ENCODE measurements at regions of chr20 and their contacts with region 1.

Region 1: GRCh38 chr20:34069341-34070078 is 42.5 kb downstream of the EIF2S2 start:
- DNase-seq: peak; percentile 48 to 75
- ATAC-seq: peak; percentile 86 to 93 (median 88)
- H3K4me3 ChIP-seq: no peak overlapping the region
- H3K27ac ChIP-seq: peak overlapping the region in 2 of 10 donors; percentile 4 to 54
- H3K4me1 ChIP-seq: peaks cover 14 to 53% (median 38%) of the 10 kb centered on the region in 9 donors
- H3K27me3 ChIP-seq: no peaks in the 10 kb centered on the region
- CTCF ChIP-seq: peak; percentile 57 to 93 (median 87)

Region 2: GRCh38 chr20:33791959-33792597 is 277.4 kb before region 1 on chr20:
- intact Hi-C with region 1: loop called in 4 of 10 experiments (anchors 2 to 10 kb)
- DNase-seq: peak; percentile 40 to 43
- ATAC-seq: peak in 4 of 8 donors; percentile 25 to 48 (median 34)
- H3K4me3 ChIP-seq: no peak overlapping the region
- H3K27ac ChIP-seq: peak overlapping the region in 6 of 10 donors; percentile 31 to 76 (median 59)
- H3K4me1 ChIP-seq: peaks cover 10 to 57% (median 43%) of the 10 kb centered on the region in 9 donors
- H3K27me3 ChIP-seq: no peaks in the 10 kb centered on the region
- CTCF ChIP-seq: peak; percentile 59 to 85 (median 80)

Region 3: DNA sequence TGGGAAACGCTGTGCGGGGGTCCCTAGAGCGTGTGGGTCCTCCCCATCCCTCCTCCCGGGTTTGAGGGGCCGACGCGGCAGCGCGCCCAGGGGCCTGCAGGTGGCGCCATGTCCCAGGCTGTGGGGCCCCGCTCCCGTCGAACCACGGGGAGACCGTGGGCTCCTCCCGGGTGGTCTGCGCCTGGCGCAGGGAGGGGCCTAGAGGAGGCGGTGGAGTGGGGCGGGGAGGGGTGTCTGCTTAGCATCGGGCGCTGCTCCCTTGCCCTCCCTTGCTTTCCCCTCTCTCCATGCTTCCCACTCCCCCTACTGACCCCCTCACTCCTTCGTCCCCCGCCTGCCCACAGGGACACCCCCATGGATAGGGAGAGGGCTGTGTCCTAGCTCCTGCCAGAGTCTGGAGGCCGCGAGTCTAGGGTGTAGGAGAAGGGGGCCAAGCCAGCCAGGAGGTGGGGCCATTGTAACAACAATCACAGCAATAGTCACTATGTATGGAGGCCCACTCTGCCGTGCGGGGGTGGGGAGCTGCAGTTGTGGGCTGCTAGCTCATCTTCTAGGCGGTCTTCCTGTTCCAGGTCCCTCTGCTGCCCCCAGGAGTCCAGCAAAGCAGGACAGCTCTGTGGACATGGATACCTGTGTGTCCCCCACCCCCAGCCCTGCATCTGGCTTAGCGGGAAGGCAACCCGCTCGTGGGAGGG is 206.7 kb before region 1 on chr20:
- intact Hi-C with region 1: loop called (anchors 1 to 5 kb)
- DNase-seq: peak; percentile 46 to 47
- ATAC-seq: peak; percentile 67 to 85 (median 78)
- H3K4me3 ChIP-seq: peak overlapping the region in 6 of 10 donors; percentile 10 to 27 (median 18)
- H3K27ac ChIP-seq: no peak overlapping the region
- H3K4me1 ChIP-seq: peaks cover 2 to 29% (median 21%) of the 10 kb centered on the region in 9 donors
- H3K27me3 ChIP-seq: no peaks in the 10 kb centered on the region
- CTCF ChIP-seq: peak; percentile 39 to 84 (median 70)

Region 4: GRCh38 chr20:33933469-33933909 is 136.0 kb before region 1 on chr20:
- intact Hi-C with region 1: loop called in 8 of 10 experiments (anchors 5 kb)
- DNase-seq: peak; percentile 34 to 65
- ATAC-seq: peak; percentile 81 to 97 (median 89)
- H3K4me3 ChIP-seq: no peak overlapping the region
- H3K27ac ChIP-seq: peak overlapping the region in 1 of 10 donors; percentile 26
- H3K4me1 ChIP-seq: peaks cover 0 to 4% (median 0%) of the 10 kb centered on the region in 9 donors
- H3K27me3 ChIP-seq: no peaks in the 10 kb centered on the region
- CTCF ChIP-seq: peak; percentile 35 to 69 (median 59)

Region 5: GRCh38 chr20:33947709-33948295 is 121.7 kb before region 1 on chr20:
- intact Hi-C with region 1: loop called in 1 of 10 experiments (anchors 10 kb)
- DNase-seq: no peak
- ATAC-seq: no peak
- H3K4me3 ChIP-seq: no peak overlapping the region
- H3K27ac ChIP-seq: no peak overlapping the region
- H3K4me1 ChIP-seq: no peaks in the 10 kb centered on the region
- H3K27me3 ChIP-seq: no peaks in the 10 kb centered on the region
- CTCF ChIP-seq: peak; percentile 11 to 56 (median 47)